T-cell (primary cell): ENCODE measurements at regions of chr5 and their contacts with region 1.

Region 1: DNA sequence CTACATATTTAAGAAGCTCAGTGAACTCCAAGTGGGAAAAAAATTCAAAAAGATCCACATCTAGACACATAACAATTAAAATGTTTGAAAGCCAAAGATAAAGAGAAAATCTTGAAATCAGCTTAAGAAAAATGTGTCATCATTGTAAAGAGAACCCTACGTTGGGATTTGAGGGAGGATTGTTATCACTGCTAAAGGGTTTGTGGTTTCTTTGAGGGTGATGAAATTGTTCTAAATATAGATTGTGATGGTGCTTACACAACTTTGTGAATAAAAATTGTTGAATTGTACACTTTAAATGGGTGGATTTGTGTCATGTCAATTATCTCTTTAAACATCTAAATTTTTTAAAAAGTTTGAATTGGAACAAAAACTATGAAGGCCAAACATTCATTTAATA is 92.2 kb upstream of the ADAMTS19 start:
- DNase-seq: no peak
- ATAC-seq: no peak
- H3K4me3 ChIP-seq: no peak overlapping the region
- H3K4me3 Mint-ChIP-seq: no peak overlapping the region
- H3K27ac ChIP-seq: no peak overlapping the region
- H3K27ac Mint-ChIP-seq: no peak overlapping the region
- H3K4me1 ChIP-seq: no peaks in the 10 kb centered on the region
- H3K4me1 Mint-ChIP-seq: no peaks in the 10 kb centered on the region
- H3K27me3 ChIP-seq: no peaks in the 10 kb centered on the region
- H3K27me3 Mint-ChIP-seq: no peaks in the 10 kb centered on the region

Region 2: GRCh38 chr5:129345213-129345924 is 22.5 kb before region 1 on chr5:
- CTCF ChIA-PET with region 1: interaction called in 1 of 2 experiments, 13 read pairs
- POLR2A ChIA-PET with region 1: no interaction called
- DNase-seq: no peak
- ATAC-seq: no peak
- H3K4me3 ChIP-seq: no peak overlapping the region
- H3K4me3 Mint-ChIP-seq: no peak overlapping the region
- H3K27ac ChIP-seq: no peak overlapping the region
- H3K27ac Mint-ChIP-seq: no peak overlapping the region
- H3K4me1 ChIP-seq: no peaks in the 10 kb centered on the region
- H3K4me1 Mint-ChIP-seq: peaks cover 0 to 5% (median 0%) of the 10 kb centered on the region in 3 donors
- H3K27me3 ChIP-seq: no peaks in the 10 kb centered on the region
- H3K27me3 Mint-ChIP-seq: no peaks in the 10 kb centered on the region

Region 3: DNA sequence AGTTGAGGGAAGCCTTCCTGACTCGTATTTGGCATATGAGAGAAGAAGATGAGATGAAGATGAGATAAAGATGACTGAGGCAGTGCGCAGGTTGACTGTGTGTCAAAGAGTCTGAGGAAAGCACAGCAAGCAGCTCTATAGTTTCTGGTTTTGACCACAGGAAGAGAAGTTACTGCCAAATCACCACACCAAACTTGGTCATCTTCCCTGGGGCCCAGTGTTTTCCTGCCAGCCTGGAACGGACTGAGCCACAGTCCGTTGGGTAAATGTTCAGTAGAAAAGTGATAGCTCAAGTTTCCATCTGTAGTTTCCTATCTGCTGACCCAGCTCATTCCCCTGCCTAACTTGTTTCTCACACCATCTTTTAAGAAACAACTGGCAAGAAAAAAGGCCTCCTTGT is 11.5 kb after region 1 on chr5:
- CTCF ChIA-PET with region 1: no interaction called
- POLR2A ChIA-PET with region 1: no interaction called
- DNase-seq: no peak
- ATAC-seq: no peak
- H3K4me3 ChIP-seq: no peak overlapping the region
- H3K4me3 Mint-ChIP-seq: no peak overlapping the region
- H3K27ac ChIP-seq: no peak overlapping the region
- H3K27ac Mint-ChIP-seq: no peak overlapping the region
- H3K4me1 ChIP-seq: no peaks in the 10 kb centered on the region
- H3K4me1 Mint-ChIP-seq: no peaks in the 10 kb centered on the region
- H3K27me3 ChIP-seq: no peaks in the 10 kb centered on the region
- H3K27me3 Mint-ChIP-seq: no peaks in the 10 kb centered on the region

Region 4: GRCh38 chr5:129609710-129610109 is 241.8 kb after region 1 on chr5:
- CTCF ChIA-PET with region 1: no interaction called
- POLR2A ChIA-PET with region 1: no interaction called
- DNase-seq: no peak
- ATAC-seq: no peak
- H3K4me3 ChIP-seq: no peak overlapping the region
- H3K4me3 Mint-ChIP-seq: no peak overlapping the region
- H3K27ac ChIP-seq: no peak overlapping the region
- H3K27ac Mint-ChIP-seq: no peak overlapping the region
- H3K4me1 ChIP-seq: no peaks in the 10 kb centered on the region
- H3K4me1 Mint-ChIP-seq: no peaks in the 10 kb centered on the region
- H3K27me3 ChIP-seq: no peaks in the 10 kb centered on the region
- H3K27me3 Mint-ChIP-seq: no peaks in the 10 kb centered on the region